CD4-positive, alpha-beta T cell (primary cell): ENCODE measurements at regions of chr1 and their contacts with region 1.

Region 1: DNA sequence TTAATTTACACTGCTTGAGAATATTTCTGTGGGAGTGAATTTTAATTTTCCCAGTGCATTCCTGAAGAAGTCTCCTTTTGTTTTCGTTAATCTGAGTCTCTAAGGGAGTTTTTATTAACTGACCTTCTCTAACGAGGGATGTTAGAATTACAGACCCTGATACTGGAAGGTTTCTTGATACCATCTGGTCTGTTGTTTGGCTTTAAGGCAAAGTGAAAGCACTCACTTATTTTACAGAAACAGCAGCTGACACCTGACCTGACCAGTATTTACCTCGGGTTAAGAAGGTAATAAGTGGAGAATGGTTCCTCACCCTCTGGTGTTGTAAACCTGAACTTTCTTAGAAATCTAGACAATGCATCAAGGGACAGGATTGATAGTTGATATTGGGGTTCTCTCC is 12.4 kb downstream of the CDC14A start:
- DNase-seq: no peak
- ATAC-seq: no peak
- H3K4me3 ChIP-seq: no peak overlapping the region
- H3K4me3 Mint-ChIP-seq: peak overlapping the region; percentile 36
- H3K27ac ChIP-seq: no peak overlapping the region
- H3K27ac Mint-ChIP-seq: peak overlapping the region; percentile 69
- H3K4me1 ChIP-seq: peaks cover 45% of the 10 kb centered on the region
- H3K4me1 Mint-ChIP-seq: peaks cover 87% of the 10 kb centered on the region
- H3K27me3 ChIP-seq: no peaks in the 10 kb centered on the region
- H3K27me3 Mint-ChIP-seq: no peaks in the 10 kb centered on the region
- CTCF ChIP-seq: no peak

Region 2: GRCh38 chr1:100377590-100378361 is 13.1 kb after region 1 on chr1:
- CTCF ChIA-PET with region 1: interaction called, 8 read pairs
- POLR2A ChIA-PET with region 1: interaction called, 3 read pairs
- intact Hi-C with region 1: loop called in 1 of 2 experiments (anchors 2 kb)
- DNase-seq: peak in 1 of 14 experiments; percentile 34
- ATAC-seq: peak; percentile 35
- H3K4me3 ChIP-seq: no peak overlapping the region
- H3K4me3 Mint-ChIP-seq: peak overlapping the region; percentile 50
- H3K27ac ChIP-seq: peak overlapping the region in 1 of 2 donors; percentile 5
- H3K27ac Mint-ChIP-seq: peak overlapping the region; percentile 52
- H3K4me1 ChIP-seq: peaks cover 30% of the 10 kb centered on the region
- H3K4me1 Mint-ChIP-seq: peaks cover 86% of the 10 kb centered on the region
- H3K27me3 ChIP-seq: no peaks in the 10 kb centered on the region
- H3K27me3 Mint-ChIP-seq: no peaks in the 10 kb centered on the region
- CTCF ChIP-seq: no peak

Region 3: DNA sequence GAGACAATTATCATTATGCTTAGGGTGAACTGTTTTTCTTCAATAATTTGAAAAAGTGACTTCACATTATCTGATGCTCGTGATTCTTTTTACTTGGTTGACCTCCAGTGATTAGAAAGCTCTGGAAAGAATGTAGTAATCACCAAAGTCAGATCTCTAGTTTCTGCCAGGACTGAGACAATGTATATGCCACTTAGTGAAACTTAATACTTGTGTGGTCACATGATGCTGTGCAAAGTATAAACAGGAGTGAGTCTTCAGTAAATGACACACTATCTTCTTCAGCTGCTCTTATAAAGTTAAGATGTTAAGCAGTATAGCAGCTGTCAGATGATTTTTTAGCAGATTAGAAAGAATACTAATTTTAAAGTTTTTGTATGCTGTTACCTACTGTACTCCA is 372.0 kb after region 1 on chr1:
- CTCF ChIA-PET with region 1: no interaction called
- POLR2A ChIA-PET with region 1: no interaction called
- intact Hi-C with region 1: no loop called
- DNase-seq: no peak
- ATAC-seq: no peak
- H3K4me3 ChIP-seq: no peak overlapping the region
- H3K4me3 Mint-ChIP-seq: no peak overlapping the region
- H3K27ac ChIP-seq: no peak overlapping the region
- H3K27ac Mint-ChIP-seq: no peak overlapping the region
- H3K4me1 ChIP-seq: no peaks in the 10 kb centered on the region
- H3K4me1 Mint-ChIP-seq: no peaks in the 10 kb centered on the region
- H3K27me3 ChIP-seq: no peaks in the 10 kb centered on the region
- H3K27me3 Mint-ChIP-seq: no peaks in the 10 kb centered on the region
- CTCF ChIP-seq: no peak